ENCODE measurements at regions of chr15 and their contacts with region 1.

Region 1: DNA sequence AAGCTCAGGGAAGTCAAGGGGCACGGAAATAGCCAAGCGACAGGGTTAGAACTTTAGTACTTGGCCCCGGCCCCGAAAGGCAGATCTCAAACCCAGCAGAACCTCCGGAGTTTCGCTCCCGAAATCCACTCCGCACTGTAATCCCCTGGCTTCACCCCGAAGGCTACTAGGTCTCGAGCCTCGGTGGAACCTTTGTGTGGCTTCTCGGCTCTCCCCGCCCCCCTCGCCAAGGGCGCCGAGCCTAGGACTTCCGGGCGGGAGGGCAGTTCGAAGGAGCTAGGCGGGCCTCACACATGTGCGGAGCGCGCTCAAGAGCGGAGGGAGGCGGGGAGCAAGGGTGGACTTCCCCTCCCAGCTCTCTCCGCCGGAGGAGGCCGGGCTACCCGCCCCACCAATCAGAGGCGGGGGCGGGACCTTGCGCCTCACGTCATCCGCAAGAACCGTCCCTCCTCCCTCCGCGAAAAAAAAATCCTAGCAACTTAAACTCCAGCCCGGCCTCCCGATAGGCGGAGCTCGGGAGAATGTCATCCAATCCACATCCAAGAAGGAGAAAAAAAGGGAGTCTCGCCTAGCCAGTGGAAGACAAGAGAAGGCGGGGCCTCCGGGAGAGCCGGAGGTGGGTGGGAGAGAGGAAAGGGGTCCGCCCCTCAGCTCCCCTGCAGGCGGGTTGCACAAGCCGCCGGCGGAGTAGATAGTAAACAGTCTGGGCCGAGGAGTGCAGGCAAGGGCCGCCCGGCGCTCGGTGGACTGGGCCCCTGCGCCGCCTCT is 2.4 kb upstream of the SIN3A start:
- DNase-seq: peak; percentile 94 to 100 (median 97)
- ATAC-seq: peak; percentile 40 to 41
- H3K4me3 Mint-ChIP-seq: peak overlapping the region; percentile 94 to 99 (median 97)
- H3K27ac Mint-ChIP-seq: peak overlapping the region; percentile 94 to 99 (median 98)
- H3K4me1 Mint-ChIP-seq: peaks cover 24 to 47% (median 37%) of the 10 kb centered on the region in 4 donors
- H3K27me3 Mint-ChIP-seq: no peaks in the 10 kb centered on the region

Region 2: GRCh38 chr15:75327005-75327404 is 126.9 kb before region 1 on chr15:
- POLR2A ChIA-PET with region 1: no interaction called
- DNase-seq: no peak
- ATAC-seq: no peak
- H3K4me3 Mint-ChIP-seq: no peak overlapping the region
- H3K27ac Mint-ChIP-seq: peak overlapping the region in 2 of 10 donors; percentile 30 to 69
- H3K4me1 Mint-ChIP-seq: no peaks in the 10 kb centered on the region
- H3K27me3 Mint-ChIP-seq: peaks cover 0 to 3% (median 0%) of the 10 kb centered on the region in 5 donors

Region 3: DNA sequence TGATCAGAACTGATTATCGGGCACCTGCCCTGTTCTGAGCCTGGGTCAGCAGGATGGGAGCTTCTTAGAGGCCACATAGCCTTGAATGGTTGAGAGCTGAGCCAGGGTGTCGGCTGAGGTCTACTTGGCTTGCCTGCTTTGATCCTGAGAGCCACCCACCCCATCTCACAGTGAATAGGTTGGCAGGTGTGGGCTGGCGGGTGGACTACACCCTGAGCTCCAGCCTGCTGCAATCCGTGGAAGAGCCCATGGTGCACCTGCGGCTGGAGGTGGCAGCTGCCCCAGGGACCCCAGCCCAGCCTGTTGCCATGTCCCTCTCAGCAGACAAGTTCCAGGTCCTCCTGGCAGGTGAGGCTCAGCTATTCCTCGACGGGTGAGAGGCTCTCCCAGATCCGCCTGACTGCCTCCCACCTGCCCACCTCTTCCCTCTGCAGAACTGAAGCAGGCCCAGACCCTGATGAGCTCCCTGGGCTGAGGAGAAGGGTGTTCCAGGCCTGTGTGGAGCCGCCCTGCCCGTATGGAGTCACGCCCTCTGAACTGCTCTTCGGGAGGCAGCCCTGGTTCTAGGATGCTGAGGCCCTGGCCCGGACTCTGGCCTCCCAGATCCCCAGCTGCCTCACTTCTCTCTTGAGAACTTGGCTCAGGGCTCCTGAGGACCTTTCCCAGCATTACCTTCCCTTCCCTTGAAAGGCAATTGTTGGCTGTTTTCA is 114.2 kb before region 1 on chr15:
- POLR2A ChIA-PET with region 1: no interaction called
- DNase-seq: no peak
- ATAC-seq: no peak
- H3K4me3 Mint-ChIP-seq: peak overlapping the region in 1 of 10 donors; percentile 31
- H3K27ac Mint-ChIP-seq: peak overlapping the region in 2 of 10 donors; percentile 10 to 27
- H3K4me1 Mint-ChIP-seq: peaks cover 16 to 28% (median 23%) of the 10 kb centered on the region in 4 donors
- H3K27me3 Mint-ChIP-seq: no peaks in the 10 kb centered on the region

Region 4: GRCh38 chr15:75468913-75469598 is 15.2 kb after region 1 on chr15:
- POLR2A ChIA-PET with region 1: interaction called, 25 read pairs
- DNase-seq: no peak
- ATAC-seq: no peak
- H3K4me3 Mint-ChIP-seq: no peak overlapping the region
- H3K27ac Mint-ChIP-seq: peak overlapping the region in 2 of 10 donors; percentile 25
- H3K4me1 Mint-ChIP-seq: peaks cover 0 to 7% (median 0%) of the 10 kb centered on the region in 4 donors
- H3K27me3 Mint-ChIP-seq: no peaks in the 10 kb centered on the region

Region 5: DNA sequence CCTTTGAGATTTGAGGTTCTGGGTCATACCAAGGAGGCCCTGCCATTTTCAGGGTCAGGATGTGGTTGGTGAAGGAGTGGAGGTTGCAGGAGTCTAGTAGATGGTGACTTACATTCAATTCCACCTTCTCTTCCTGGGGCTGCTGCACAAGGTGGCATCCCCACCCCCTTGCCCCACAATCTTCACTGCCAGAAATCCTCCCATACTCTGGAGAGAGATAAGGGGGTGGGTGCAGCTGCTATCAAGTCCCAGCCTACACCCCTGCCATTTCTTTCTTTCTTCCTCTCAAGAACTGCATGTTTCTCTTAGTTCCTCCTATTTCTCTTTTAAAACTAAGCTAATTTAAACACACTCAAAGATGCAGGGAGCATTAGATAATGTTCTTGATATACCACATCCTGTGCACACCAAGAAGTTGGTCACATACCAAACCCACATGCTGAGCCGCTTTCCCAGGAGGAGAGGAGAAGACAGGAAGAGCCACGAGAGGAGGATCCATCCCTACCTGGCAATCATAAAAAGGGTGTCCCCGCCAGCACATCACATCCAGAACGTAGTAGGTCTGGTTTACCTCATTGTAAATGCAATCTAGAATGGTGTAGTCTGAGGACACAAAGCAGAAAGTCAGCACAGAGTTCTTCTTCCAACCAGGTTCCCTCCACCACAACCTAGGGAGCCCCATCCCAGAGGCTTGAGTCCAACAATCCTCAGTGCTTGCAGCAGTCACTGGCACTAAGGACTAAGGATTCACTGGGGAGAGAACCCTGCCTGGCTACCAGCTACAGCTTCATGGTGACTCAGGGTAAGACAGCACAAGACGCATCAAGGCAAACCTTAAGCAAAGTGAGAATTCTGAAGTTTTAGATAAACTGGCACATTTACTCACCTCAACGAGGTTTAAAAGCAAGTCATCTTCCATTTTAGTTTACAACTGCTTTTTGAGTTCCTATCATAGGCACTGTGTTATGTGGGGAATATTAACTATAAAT is 153.1 kb after region 1 on chr15:
- POLR2A ChIA-PET with region 1: interaction called, 10 read pairs
- DNase-seq: peak in 5 of 10 donors; percentile 20 to 57 (median 42)
- ATAC-seq: peak; percentile 76 to 85
- H3K4me3 Mint-ChIP-seq: peak overlapping the region; percentile 51 to 82 (median 76)
- H3K27ac Mint-ChIP-seq: peak overlapping the region; percentile 75 to 92 (median 88)
- H3K4me1 Mint-ChIP-seq: peaks cover 26 to 51% (median 44%) of the 10 kb centered on the region in 4 donors
- H3K27me3 Mint-ChIP-seq: no peaks in the 10 kb centered on the region

Region 6: GRCh38 chr15:75639709-75640482 is 186.0 kb after region 1 on chr15 and contains the start of gene IMP3:
- POLR2A ChIA-PET with region 1: interaction called, 207 read pairs
- DNase-seq: peak; percentile 84 to 95 (median 92)
- ATAC-seq: peak; percentile 89 to 91
- H3K4me3 Mint-ChIP-seq: peak within 1 kb of the TSS; percentile 89 to 96 (median 94)
- H3K27ac Mint-ChIP-seq: peak within 1 kb of the TSS; percentile 49 to 99 (median 96)
- H3K4me1 Mint-ChIP-seq: peaks cover 19 to 47% (median 45%) of the 10 kb centered on the region in 4 donors
- H3K27me3 Mint-ChIP-seq: no peaks in the 10 kb centered on the region
- polyA plus RNA-seq, gene IMP3: 199 to 256 (median 238) TPM

Measured in naive thymus-derived CD8-positive, alpha-beta T cell (primary cell).